ENCODE measurements at regions of chr2 and their contacts with region 1.

Region 1: GRCh38 chr2:1140389-1141003 is 189.8 kb downstream of the SNTG2 start:
- DNase-seq: peak; percentile 24
- ATAC-seq: peak; percentile 98
- H3K4me3 ChIP-seq: no peak overlapping the region
- H3K27ac ChIP-seq: no peak overlapping the region
- H3K4me1 ChIP-seq: no peaks in the 10 kb centered on the region
- H3K27me3 ChIP-seq: peaks cover 0 to 9% of the 10 kb centered on the region in 2 experiments; a peak in 1 of 5 replicates
- CTCF ChIP-seq: peak; percentile 87
- EP300 ChIP-seq: no peak
- POLR2A ChIP-seq: no peak
- RAD21 ChIP-seq: no peak

Region 2: GRCh38 chr2:714005-714741 is 426.3 kb before region 1 on chr2:
- CTCF ChIA-PET with region 1: no interaction called
- POLR2A ChIA-PET with region 1: no interaction called
- in situ Hi-C with region 1: loop called (anchors 25 kb)
- intact Hi-C with region 1: no loop called
- DNase-seq: peak; percentile 49
- ATAC-seq: peak; percentile 78
- H3K4me3 ChIP-seq: no peak overlapping the region
- H3K27ac ChIP-seq: no peak overlapping the region
- H3K4me1 ChIP-seq: no peaks in the 10 kb centered on the region
- H3K27me3 ChIP-seq: peaks cover 1 to 22% of the 10 kb centered on the region in 2 experiments; a peak in 4 of 5 replicates
- CTCF ChIP-seq: peak; percentile 70
- EP300 ChIP-seq: no peak
- POLR2A ChIP-seq: no peak
- RAD21 ChIP-seq: no peak

Region 3: DNA sequence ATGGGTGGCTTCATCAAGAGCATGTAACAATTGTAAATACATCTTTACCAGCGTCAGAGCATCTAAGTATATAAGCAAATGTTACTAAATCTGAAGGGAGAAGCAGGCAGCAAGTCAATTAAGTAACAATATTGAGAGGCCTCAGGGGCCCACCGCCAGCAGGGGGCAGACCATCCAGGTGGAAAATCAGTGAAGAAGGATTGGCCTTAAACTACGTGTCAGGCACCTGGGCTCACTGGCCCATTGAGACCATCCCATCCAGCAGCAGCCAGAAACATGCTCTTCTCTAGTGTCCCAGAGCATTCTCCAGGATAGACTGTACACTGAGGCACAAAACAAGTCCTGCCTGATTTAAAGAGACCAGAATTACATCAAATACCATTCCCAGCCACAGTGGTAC is 286.0 kb before region 1 on chr2:
- CTCF ChIA-PET with region 1: no interaction called
- POLR2A ChIA-PET with region 1: no interaction called
- in situ Hi-C with region 1: no loop called
- intact Hi-C with region 1: loop called (anchors 1 kb)
- DNase-seq: peak; percentile 34
- ATAC-seq: peak; percentile 72
- H3K4me3 ChIP-seq: no peak overlapping the region
- H3K27ac ChIP-seq: no peak overlapping the region
- H3K4me1 ChIP-seq: no peaks in the 10 kb centered on the region
- H3K27me3 ChIP-seq: peaks cover 8 to 34% of the 10 kb centered on the region in 2 experiments; a peak in 2 of 5 replicates
- CTCF ChIP-seq: peak; percentile 64
- EP300 ChIP-seq: no peak
- POLR2A ChIP-seq: no peak
- RAD21 ChIP-seq: peak; percentile 35; the same call in 1 of the 2 replicates

Region 4: DNA sequence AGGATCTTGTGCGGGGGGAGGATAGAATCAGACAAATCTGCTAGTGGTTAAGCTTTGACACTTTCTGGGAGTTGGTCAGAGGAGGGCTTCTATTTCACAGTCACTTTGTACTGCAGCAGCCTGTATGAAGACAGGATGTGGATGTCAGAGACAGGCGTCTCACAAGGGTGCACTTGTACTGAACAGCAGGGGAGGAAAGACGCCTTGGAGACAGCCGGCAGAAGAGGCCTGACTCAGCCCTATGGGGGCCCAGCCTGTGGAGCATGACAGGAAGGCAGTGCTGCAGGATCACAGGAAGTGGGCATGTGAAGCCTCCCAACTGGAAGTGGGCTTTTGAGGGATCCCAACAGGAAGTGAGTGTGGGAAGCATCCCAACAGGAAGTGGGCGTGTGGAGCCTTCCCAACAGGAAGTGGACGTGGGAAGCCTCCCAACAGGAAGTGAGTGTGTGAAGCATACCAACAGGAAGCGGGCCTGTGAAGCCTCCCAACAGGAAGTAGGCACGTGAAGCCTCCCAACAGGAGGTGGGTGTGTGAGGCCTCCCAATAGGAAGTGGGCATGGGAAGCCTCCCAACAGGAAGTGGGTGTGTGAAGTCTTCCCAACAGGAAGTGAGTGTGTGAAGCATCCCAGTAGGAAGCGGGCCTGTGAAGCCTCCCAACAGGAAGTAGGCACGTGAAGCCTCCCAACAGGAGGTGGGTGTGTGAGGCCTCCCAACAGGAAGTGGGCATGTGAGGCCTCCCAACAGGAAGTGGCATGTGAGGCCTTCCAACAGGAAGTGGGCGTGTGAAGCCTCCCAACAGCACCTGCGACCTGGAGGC is 22.5 kb after region 1 on chr2:
- CTCF ChIA-PET with region 1: no interaction called
- POLR2A ChIA-PET with region 1: no interaction called
- in situ Hi-C with region 1: no loop called
- intact Hi-C with region 1: no loop called
- DNase-seq: no peak
- ATAC-seq: no peak
- H3K4me3 ChIP-seq: no peak overlapping the region
- H3K27ac ChIP-seq: no peak overlapping the region
- H3K4me1 ChIP-seq: no peaks in the 10 kb centered on the region
- H3K27me3 ChIP-seq: no peaks in the 10 kb centered on the region
- CTCF ChIP-seq: no peak
- EP300 ChIP-seq: no peak
- POLR2A ChIP-seq: no peak
- RAD21 ChIP-seq: no peak

Region 5: GRCh38 chr2:1227274-1227900 is 86.9 kb after region 1 on chr2:
- CTCF ChIA-PET with region 1: no interaction called
- POLR2A ChIA-PET with region 1: no interaction called
- in situ Hi-C with region 1: no loop called
- intact Hi-C with region 1: no loop called
- DNase-seq: no peak
- ATAC-seq: no peak
- H3K4me3 ChIP-seq: no peak overlapping the region
- H3K27ac ChIP-seq: no peak overlapping the region
- H3K4me1 ChIP-seq: no peaks in the 10 kb centered on the region
- H3K27me3 ChIP-seq: peaks cover 3 to 43% of the 10 kb centered on the region in 2 experiments; a peak in 4 of 5 replicates
- CTCF ChIP-seq: no peak
- EP300 ChIP-seq: no peak
- POLR2A ChIP-seq: no peak
- RAD21 ChIP-seq: no peak